Activated CD4-positive, alpha-beta memory T cell treated with anti-CD3 and anti-CD28 coated beads for 36 hours (primary cell): ENCODE measurements at regions of chr3 and their contacts with region 1.

Region 1: GRCh38 chr3:136882572-136882971 is 20.6 kb downstream of the NCK1 start:
- DNase-seq: no peak
- H3K4me3 Mint-ChIP-seq: no peak overlapping the region
- H3K27ac Mint-ChIP-seq: no peak overlapping the region
- H3K4me1 Mint-ChIP-seq: peaks cover 53% of the 10 kb centered on the region
- H3K27me3 Mint-ChIP-seq: no peaks in the 10 kb centered on the region

Region 2: DNA sequence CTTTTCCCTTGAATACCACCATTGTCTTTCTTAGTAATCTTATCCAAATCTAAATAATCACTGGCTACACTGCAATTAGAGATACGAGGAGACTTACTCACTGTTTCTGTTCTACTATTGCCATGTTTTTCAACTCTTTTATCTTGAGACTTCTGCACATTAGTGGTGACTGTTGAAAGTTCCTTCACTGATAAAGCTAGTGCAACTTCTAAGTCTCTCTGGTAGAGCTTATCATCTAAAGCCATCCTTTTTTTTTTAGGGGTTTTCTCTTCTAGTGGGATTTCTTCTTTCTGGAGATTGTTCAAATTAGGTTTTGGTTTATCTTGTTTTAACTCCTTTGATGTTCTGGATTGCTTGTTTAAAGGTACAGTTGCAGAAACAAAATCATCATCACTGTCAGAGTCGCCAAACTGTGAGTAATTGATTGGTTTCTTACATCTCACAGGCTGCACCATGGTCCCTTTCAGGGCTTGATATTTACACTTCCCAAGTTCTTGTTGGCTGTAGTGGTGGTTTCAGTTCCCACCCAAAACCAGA is 17.1 kb after region 1 on chr3:
- CTCF ChIA-PET with region 1: no interaction called
- POLR2A ChIA-PET with region 1: no interaction called
- intact Hi-C with region 1: loop called (anchors 2 kb)
- DNase-seq: no peak
- H3K4me3 Mint-ChIP-seq: peak overlapping the region; percentile 1
- H3K27ac Mint-ChIP-seq: peak overlapping the region; percentile 69
- H3K4me1 Mint-ChIP-seq: peaks cover 59% of the 10 kb centered on the region
- H3K27me3 Mint-ChIP-seq: no peaks in the 10 kb centered on the region

Region 3: GRCh38 chr3:136919799-136920580 is 37.4 kb after region 1 on chr3:
- CTCF ChIA-PET with region 1: interaction called, 3 read pairs
- POLR2A ChIA-PET with region 1: no interaction called
- intact Hi-C with region 1: loop called (anchors 5 kb)
- DNase-seq: no peak
- H3K4me3 Mint-ChIP-seq: no peak overlapping the region
- H3K27ac Mint-ChIP-seq: peak overlapping the region; percentile 68
- H3K4me1 Mint-ChIP-seq: peaks cover 78% of the 10 kb centered on the region
- H3K27me3 Mint-ChIP-seq: no peaks in the 10 kb centered on the region

Region 4: DNA sequence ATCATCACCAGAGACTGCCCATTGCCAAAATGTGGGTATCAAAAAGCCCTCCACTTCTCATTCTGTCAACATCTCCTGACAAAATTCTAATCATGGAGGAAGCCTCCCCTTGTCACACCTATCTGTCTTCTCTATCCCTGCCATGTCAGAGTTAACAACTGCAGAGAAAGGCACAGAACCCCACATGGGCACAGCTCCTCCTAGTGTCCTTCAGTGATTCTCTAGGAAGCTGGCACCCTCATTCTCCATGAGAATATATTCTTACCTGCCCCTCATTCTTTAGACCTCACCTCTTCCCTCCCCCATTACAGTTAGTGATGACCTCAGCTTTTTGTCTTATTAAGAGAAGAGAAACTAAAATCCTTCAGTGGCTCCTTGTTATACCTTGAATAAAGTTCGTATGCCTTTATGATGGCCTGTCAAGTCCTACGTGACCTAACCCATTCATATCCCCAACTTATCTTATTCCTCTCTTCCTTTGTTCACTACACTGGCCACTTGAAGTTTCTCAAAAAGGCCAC is 1402.4 kb after region 1 on chr3:
- CTCF ChIA-PET with region 1: no interaction called
- POLR2A ChIA-PET with region 1: no interaction called
- intact Hi-C with region 1: no loop called
- DNase-seq: no peak
- H3K4me3 Mint-ChIP-seq: no peak overlapping the region
- H3K27ac Mint-ChIP-seq: no peak overlapping the region
- H3K4me1 Mint-ChIP-seq: peaks cover 14% of the 10 kb centered on the region
- H3K27me3 Mint-ChIP-seq: no peaks in the 10 kb centered on the region